Activated CD8-positive, alpha-beta T cell treated with anti-CD3 and anti-CD28 coated beads, Interleukin-2, amount 10 ng/mL, durations not matched to agents 7 days and 5 days (primary cell): ENCODE measurements at regions of chr6 and their contacts with region 1.

Region 1: DNA sequence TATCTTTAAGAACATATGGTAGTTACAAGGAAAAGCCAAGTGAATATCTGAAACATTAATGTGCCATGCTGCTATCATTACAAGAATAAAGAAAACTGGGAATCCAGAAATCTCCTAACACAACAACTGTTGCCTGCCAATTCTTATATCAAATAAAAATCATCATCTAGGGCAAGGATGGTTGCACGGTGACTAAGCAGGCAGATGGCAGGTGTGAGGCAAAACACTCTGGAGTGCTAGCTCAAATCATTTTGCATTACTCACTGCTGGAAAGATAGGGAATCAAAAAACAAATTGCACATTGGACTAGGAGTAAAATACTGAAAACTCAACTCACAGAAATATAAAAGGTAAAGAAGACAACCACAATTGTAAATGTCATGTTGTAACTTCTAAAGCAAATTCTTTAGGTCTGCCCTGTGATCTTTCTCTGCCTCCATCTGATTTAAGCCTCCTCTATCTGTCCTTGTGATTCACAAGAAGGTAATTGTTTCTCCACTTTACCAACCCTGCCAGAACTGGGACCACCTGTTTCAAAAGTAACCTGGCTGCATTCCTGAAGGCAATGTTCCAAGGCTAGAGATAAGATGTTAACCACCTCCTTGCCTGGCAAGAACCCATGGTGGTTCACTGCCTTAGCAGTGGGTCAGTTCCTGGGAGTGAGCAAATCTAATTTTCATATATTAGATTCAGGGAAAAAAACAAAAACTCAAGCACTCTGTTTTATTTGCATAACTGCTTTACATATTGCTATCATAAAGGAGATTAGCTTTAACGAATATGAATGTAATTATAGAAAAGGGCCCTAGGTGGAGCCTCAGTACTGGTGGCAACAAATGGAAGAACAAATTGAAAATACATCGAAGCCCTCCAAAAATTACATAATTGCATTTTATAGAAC is 33.1 kb upstream of the LCA5 start:
- DNase-seq: no peak
- ATAC-seq: no peak
- H3K4me3 Mint-ChIP-seq: no peak overlapping the region
- H3K27ac Mint-ChIP-seq: no peak overlapping the region
- H3K4me1 Mint-ChIP-seq: no peaks in the 10 kb centered on the region
- H3K27me3 Mint-ChIP-seq: peaks cover 4% of the 10 kb centered on the region

Region 2: DNA sequence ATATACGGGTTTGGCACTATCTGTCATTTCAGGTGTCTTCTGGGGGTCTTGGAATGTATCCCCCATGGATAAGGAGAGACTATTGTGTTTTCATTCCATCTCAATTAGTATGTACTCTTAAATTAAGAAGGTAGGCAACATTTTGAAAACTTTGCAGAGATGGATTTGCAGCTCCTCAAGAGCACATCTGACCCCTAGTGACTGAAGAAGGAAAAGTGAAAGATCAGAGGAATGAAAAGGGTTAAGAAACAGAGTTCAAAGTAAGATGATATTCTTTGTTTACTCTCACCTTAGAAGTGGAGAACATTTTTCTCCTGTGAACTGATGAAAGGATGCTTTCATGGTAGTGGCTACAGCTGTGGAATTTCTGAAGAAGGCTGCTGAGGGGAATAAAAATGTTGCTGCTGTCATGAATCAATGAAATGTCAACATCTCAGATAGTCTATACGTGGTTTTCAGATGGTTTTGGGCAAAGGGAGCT is 102.3 kb after region 1 on chr6:
- CTCF ChIA-PET with region 1: interaction called, 15 read pairs
- POLR2A ChIA-PET with region 1: no interaction called
- DNase-seq: no peak
- ATAC-seq: no peak
- H3K4me3 Mint-ChIP-seq: no peak overlapping the region
- H3K27ac Mint-ChIP-seq: no peak overlapping the region
- H3K4me1 Mint-ChIP-seq: peaks cover 20% of the 10 kb centered on the region
- H3K27me3 Mint-ChIP-seq: no peaks in the 10 kb centered on the region